Esophagus muscularis mucosa (tissue), 4 donors: ENCODE measurements at regions of chr14 and their contacts with region 1.

Region 1: DNA sequence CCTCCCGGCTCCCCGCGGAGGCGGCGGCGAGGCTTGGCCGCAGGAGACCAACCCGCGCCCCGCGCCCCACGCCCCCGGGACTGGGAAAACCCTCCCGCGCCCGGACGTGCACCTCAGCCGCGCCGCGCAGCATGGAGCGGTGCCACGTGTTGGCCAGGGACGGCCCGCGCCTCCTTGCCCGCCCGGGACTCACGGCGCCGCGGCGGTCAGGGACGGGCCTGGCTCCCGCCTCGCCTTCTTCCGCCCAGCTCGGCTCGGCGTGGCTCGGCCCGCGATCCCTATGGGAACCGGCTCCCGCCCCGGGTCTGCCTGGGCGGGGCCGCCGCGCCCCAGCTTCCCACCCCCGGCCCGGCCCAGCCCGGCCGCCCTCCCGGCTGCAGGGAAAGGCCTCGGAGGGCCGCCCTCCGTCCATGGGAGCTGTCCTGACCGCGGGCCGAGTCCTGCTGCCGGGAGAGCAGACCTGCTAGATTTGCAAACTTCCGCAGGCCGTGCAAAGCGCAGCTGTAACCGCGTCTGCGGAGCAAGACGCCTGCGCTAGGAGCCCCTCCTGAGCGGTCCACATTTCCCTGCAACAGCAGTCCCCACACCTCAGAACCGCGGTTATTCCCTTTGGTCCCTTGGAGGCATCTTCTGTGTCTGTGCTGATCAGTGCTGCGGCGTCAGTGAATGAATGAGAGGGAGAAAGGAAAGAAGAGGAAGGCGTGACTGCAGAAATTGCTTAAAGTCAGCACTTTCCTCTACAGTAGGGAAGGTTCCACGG is at the start of gene CDKL1:
- DNase-seq: no peak
- H3K4me3 ChIP-seq: peak within 1 kb of the TSS; percentile 68 to 93 (median 76)
- H3K27ac ChIP-seq: peak within 1 kb of the TSS; percentile 73 to 89 (median 82)
- H3K4me1 ChIP-seq: peaks cover 7 to 36% (median 29%) of the 10 kb centered on the region in 4 donors
- H3K27me3 ChIP-seq: peaks cover 0 to 5% (median 0%) of the 10 kb centered on the region in 4 donors
- CTCF ChIP-seq: no peak
- EP300 ChIP-seq: no peak
- POLR2A ChIP-seq: no peak
- total RNA-seq, gene CDKL1: 11.2 to 17.7 (median 12.3) TPM

Region 2: GRCh38 chr14:50321009-50321660 is 75.7 kb before region 1 on chr14:
- intact Hi-C with region 1: loop called (anchors 2 kb)
- DNase-seq: no peak
- H3K4me3 ChIP-seq: peak overlapping the region; percentile 16 to 47 (median 40)
- H3K27ac ChIP-seq: peak overlapping the region; percentile 71 to 81 (median 74)
- H3K4me1 ChIP-seq: peaks cover 8 to 21% (median 17%) of the 10 kb centered on the region in 4 donors
- H3K27me3 ChIP-seq: no peaks in the 10 kb centered on the region
- CTCF ChIP-seq: peak; percentile 77 to 87 (median 84)
- EP300 ChIP-seq: no peak
- POLR2A ChIP-seq: no peak

Region 3: DNA sequence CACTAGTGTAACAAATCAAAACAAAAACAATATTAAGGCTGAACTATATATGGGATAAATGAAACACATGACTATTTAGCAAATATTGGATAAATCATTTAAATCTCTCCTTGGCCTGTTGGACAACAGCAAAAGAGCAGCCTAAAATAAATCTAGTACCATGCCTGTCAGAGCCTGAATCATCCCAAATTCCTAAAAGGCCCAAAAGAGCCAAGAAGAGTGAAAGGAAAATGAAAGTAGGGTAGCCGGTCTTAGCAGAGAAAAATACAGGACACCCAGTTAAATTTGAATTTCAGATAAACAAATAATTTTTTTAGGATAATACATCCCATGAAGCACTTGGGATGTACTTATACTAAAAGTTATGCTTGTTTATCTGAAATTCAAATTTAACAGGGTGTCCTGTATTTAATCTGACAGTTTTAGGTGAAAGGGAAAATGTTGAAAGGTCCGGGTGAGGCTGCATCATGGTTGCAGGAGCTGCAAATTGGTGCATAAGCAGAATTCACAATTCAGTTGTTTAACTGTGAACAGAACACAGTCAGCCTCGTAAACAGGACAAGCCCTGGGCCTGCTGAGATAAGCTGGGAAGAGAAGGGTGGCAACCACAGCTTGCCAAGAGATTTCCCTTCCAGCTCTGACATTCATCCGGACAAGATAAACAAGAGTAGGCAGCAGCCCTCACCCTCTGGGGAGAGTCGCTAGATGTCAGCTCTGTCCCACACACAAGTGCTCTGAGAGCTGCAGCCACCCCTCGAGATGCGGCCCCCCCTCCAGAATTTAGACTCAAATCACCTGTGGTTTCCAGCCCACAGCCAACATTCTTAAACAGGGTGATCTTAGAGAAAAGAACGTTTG is 54.4 kb before region 1 on chr14:
- intact Hi-C with region 1: loop called (anchors 10 kb)
- DNase-seq: peak; percentile 90
- H3K4me3 ChIP-seq: peak overlapping the region; percentile 22 to 47 (median 43)
- H3K27ac ChIP-seq: peak overlapping the region; percentile 64 to 74 (median 70)
- H3K4me1 ChIP-seq: peaks cover 21 to 52% (median 51%) of the 10 kb centered on the region in 4 donors
- H3K27me3 ChIP-seq: no peaks in the 10 kb centered on the region
- CTCF ChIP-seq: peak; percentile 21 to 47 (median 43)
- EP300 ChIP-seq: no peak
- POLR2A ChIP-seq: no peak

Region 4: GRCh38 chr14:50462111-50462510 is 65.3 kb after region 1 on chr14:
- intact Hi-C with region 1: no loop called
- DNase-seq: no peak
- H3K4me3 ChIP-seq: no peak overlapping the region
- H3K27ac ChIP-seq: no peak overlapping the region
- H3K4me1 ChIP-seq: no peaks in the 10 kb centered on the region
- H3K27me3 ChIP-seq: no peaks in the 10 kb centered on the region
- CTCF ChIP-seq: no peak
- EP300 ChIP-seq: no peak
- POLR2A ChIP-seq: no peak

Region 5: DNA sequence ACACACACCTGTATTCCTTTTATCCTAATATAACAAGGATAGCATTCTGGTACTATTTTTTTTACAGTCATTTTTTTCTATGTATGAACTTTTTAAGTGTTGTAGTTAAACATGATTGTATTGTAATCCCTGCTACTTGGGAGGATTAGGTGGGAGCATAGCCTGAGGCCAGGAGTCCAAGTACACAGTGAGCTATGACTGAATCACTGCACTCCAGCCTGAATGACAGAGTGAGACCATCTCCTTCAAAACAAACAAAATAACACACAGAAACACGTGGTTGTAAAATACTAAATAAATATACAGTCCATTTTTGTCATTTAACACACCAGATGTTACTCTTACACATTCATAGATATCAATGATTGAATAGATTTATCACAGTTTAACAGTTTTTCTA is 78.7 kb after region 1 on chr14:
- intact Hi-C with region 1: no loop called
- DNase-seq: no peak
- H3K4me3 ChIP-seq: no peak overlapping the region
- H3K27ac ChIP-seq: no peak overlapping the region
- H3K4me1 ChIP-seq: no peaks in the 10 kb centered on the region
- H3K27me3 ChIP-seq: no peaks in the 10 kb centered on the region
- CTCF ChIP-seq: no peak
- EP300 ChIP-seq: no peak
- POLR2A ChIP-seq: no peak

Region 6: GRCh38 chr14:50532502-50533240 is 135.9 kb after region 1 on chr14 and contains the start of gene MAP4K5:
- intact Hi-C with region 1: loop called (anchors 5 kb)
- DNase-seq: peak; percentile 95
- H3K4me3 ChIP-seq: peak within 1 kb of the TSS; percentile 87 to 96 (median 92)
- H3K27ac ChIP-seq: peak within 1 kb of the TSS; percentile 93 to 98 (median 97)
- H3K4me1 ChIP-seq: peaks cover 12 to 47% (median 43%) of the 10 kb centered on the region in 4 donors
- H3K27me3 ChIP-seq: no peaks in the 10 kb centered on the region
- CTCF ChIP-seq: peak; percentile 95 to 97 (median 96)
- EP300 ChIP-seq: no peak
- POLR2A ChIP-seq: peak; percentile 43
- total RNA-seq, gene MAP4K5: 84.4 to 108 (median 91.2) TPM

Region 7: GRCh38 chr14:50697659-50698290 is 301.0 kb after region 1 on chr14:
- intact Hi-C with region 1: no loop called
- DNase-seq: no peak
- H3K4me3 ChIP-seq: no peak overlapping the region
- H3K27ac ChIP-seq: no peak overlapping the region
- H3K4me1 ChIP-seq: no peaks in the 10 kb centered on the region
- H3K27me3 ChIP-seq: peaks cover 0 to 8% (median 0%) of the 10 kb centered on the region in 4 donors
- CTCF ChIP-seq: no peak
- EP300 ChIP-seq: no peak
- POLR2A ChIP-seq: no peak